Mammary epithelial cell (primary cell): ENCODE measurements at regions of chr12 and their contacts with region 1.

Region 1: GRCh38 chr12:85711735-85712390 is 124.3 kb downstream of the RASSF9 start:
- DNase-seq: no peak
- H3K4me3 ChIP-seq: no peak overlapping the region
- H3K27ac ChIP-seq: no peak overlapping the region
- H3K4me1 ChIP-seq: no peaks in the 10 kb centered on the region
- H3K27me3 ChIP-seq: no peaks in the 10 kb centered on the region
- CTCF ChIP-seq: no peak

Region 2: GRCh38 chr12:85693093-85693665 is 18.7 kb before region 1 on chr12:
- CTCF ChIA-PET with region 1: no interaction called
- dilution Hi-C with region 1: no loop called
- in situ Hi-C with region 1: no loop called
- intact Hi-C with region 1: no loop called
- DNase-seq: no peak
- H3K4me3 ChIP-seq: no peak overlapping the region
- H3K27ac ChIP-seq: no peak overlapping the region
- H3K4me1 ChIP-seq: no peaks in the 10 kb centered on the region
- H3K27me3 ChIP-seq: no peaks in the 10 kb centered on the region
- CTCF ChIP-seq: no peak

Region 3: GRCh38 chr12:85775071-85775470 is 63.2 kb after region 1 on chr12:
- CTCF ChIA-PET with region 1: no interaction called
- dilution Hi-C with region 1: no loop called
- in situ Hi-C with region 1: no loop called
- intact Hi-C with region 1: loop called (anchors 1 kb)
- DNase-seq: no peak
- H3K4me3 ChIP-seq: no peak overlapping the region
- H3K27ac ChIP-seq: no peak overlapping the region
- H3K4me1 ChIP-seq: no peaks in the 10 kb centered on the region
- H3K27me3 ChIP-seq: no peaks in the 10 kb centered on the region
- CTCF ChIP-seq: no peak